SK-N-SH (cell line): ENCODE measurements at regions of chr7 and their contacts with region 1.

Region 1: GRCh38 chr7:6636741-6637543 is at the start of gene ZNF316:
- DNase-seq: peak; percentile 99
- H3K4me3 ChIP-seq: peak within 1 kb of the TSS; percentile 68 to 93
- H3K27ac ChIP-seq: peak within 1 kb of the TSS in 1 of 2 experiments; percentile 67; a peak in 2 of 4 replicates
- H3K4me1 ChIP-seq: peaks cover 5 to 15% of the 10 kb centered on the region in 2 experiments; a peak in 2 of 4 replicates
- H3K27me3 ChIP-seq: no peaks in the 10 kb centered on the region
- CTCF ChIP-seq: no peak
- EP300 ChIP-seq: no peak
- RAD21 ChIP-seq: no peak
- polyA plus RNA-seq, gene ZNF316: 18.0 and 18.6 TPM in 2 replicates

Region 2: GRCh38 chr7:6658618-6659341 is 21.8 kb after region 1 on chr7:
- CTCF ChIA-PET with region 1: interaction called, 11 read pairs
- POLR2A ChIA-PET with region 1: interaction called, 6 read pairs
- DNase-seq: peak; percentile 73
- H3K4me3 ChIP-seq: no peak overlapping the region
- H3K27ac ChIP-seq: no peak overlapping the region
- H3K4me1 ChIP-seq: peaks cover 0 to 13% of the 10 kb centered on the region in 2 experiments; a peak in 1 of 4 replicates
- H3K27me3 ChIP-seq: no peaks in the 10 kb centered on the region
- CTCF ChIP-seq: no peak
- EP300 ChIP-seq: no peak
- RAD21 ChIP-seq: no peak